CD8-positive, alpha-beta T cell (primary cell): ENCODE measurements at regions of chr14 and their contacts with region 1.

Region 1: GRCh38 chr14:89767861-89768268 is 186.7 kb downstream of the EFCAB11 start:
- DNase-seq: peak; percentile 42 to 87 (median 67)
- ATAC-seq: peak; percentile 93
- H3K4me3 ChIP-seq: no peak overlapping the region
- H3K4me3 Mint-ChIP-seq: peak overlapping the region; percentile 67
- H3K27ac ChIP-seq: no peak overlapping the region
- H3K27ac Mint-ChIP-seq: peak overlapping the region; percentile 84
- H3K4me1 ChIP-seq: peaks cover 29% of the 10 kb centered on the region
- H3K4me1 Mint-ChIP-seq: peaks cover 50% of the 10 kb centered on the region
- H3K27me3 ChIP-seq: no peaks in the 10 kb centered on the region
- H3K27me3 Mint-ChIP-seq: no peaks in the 10 kb centered on the region
- CTCF ChIP-seq: peak; percentile 87

Region 2: GRCh38 chr14:89040460-89041259 is 727.2 kb before region 1 on chr14:
- CTCF ChIA-PET with region 1: interaction called, 6 read pairs
- POLR2A ChIA-PET with region 1: no interaction called
- intact Hi-C with region 1: loop called (anchors 1 kb)
- DNase-seq: peak; percentile 56 to 90 (median 74)
- ATAC-seq: peak; percentile 66
- H3K4me3 ChIP-seq: peak overlapping the region; percentile 27 to 55
- H3K4me3 Mint-ChIP-seq: peak overlapping the region; percentile 79
- H3K27ac ChIP-seq: no peak overlapping the region
- H3K27ac Mint-ChIP-seq: no peak overlapping the region
- H3K4me1 ChIP-seq: peaks cover 7% of the 10 kb centered on the region
- H3K4me1 Mint-ChIP-seq: peaks cover 7% of the 10 kb centered on the region
- H3K27me3 ChIP-seq: peaks cover 0 to 14% of the 10 kb centered on the region in 2 experiments
- H3K27me3 Mint-ChIP-seq: peaks cover 29% of the 10 kb centered on the region
- CTCF ChIP-seq: peak; percentile 90

Region 3: GRCh38 chr14:89336338-89336737 is 431.5 kb before region 1 on chr14:
- CTCF ChIA-PET with region 1: no interaction called
- POLR2A ChIA-PET with region 1: interaction called, 3 read pairs
- intact Hi-C with region 1: loop called (anchors 1 to 5 kb)
- DNase-seq: peak in 2 of 9 experiments; percentile 37 to 55
- ATAC-seq: peak; percentile 23
- H3K4me3 ChIP-seq: no peak overlapping the region
- H3K4me3 Mint-ChIP-seq: no peak overlapping the region
- H3K27ac ChIP-seq: no peak overlapping the region
- H3K27ac Mint-ChIP-seq: peak overlapping the region; percentile 23
- H3K4me1 ChIP-seq: peaks cover 4% of the 10 kb centered on the region
- H3K4me1 Mint-ChIP-seq: peaks cover 51% of the 10 kb centered on the region
- H3K27me3 ChIP-seq: no peaks in the 10 kb centered on the region
- H3K27me3 Mint-ChIP-seq: no peaks in the 10 kb centered on the region
- CTCF ChIP-seq: no peak

Region 4: DNA sequence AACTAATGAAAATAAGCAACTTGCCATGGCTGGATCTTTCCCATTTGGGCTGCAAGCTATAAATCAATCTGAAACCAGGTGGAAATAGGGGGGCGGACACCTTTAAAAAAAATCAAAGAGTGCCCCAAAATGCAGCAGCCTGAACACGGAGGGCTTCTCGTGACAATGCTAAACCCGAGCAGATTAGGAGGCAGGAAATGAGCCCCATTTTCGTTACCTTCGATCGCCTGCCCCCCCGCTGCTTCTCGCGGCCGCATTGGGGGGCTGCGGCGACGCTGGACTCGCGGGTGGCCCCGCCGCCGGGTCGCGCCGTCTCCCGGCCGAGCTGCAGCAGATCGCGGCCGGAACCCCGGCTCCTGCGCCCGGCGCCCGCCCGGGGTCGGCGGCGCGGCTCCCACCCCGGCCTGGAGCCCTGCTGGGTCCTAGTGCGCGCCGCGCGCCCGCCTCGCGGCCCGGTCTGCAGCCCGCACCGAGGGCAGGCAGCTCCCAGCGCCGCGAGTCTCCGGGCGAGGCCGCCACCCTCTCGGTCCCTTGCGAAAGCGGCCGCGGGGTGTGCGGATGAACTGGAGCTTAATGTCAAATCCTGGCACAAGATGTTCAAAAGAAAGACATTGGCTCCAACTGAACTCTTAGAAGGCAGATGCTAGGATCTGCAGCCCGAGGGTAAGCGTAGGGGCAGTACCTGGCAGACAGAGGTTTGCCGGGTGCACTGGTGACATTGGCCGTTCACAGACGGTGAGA is 148.9 kb before region 1 on chr14:
- CTCF ChIA-PET with region 1: interaction called, 4 read pairs
- POLR2A ChIA-PET with region 1: interaction called, 4 read pairs
- intact Hi-C with region 1: loop called (anchors 1 to 5 kb)
- DNase-seq: peak; percentile 43 to 87 (median 66)
- ATAC-seq: peak; percentile 44
- H3K4me3 ChIP-seq: peak overlapping the region; percentile 64 to 73
- H3K4me3 Mint-ChIP-seq: peak overlapping the region; percentile 97
- H3K27ac ChIP-seq: peak overlapping the region; percentile 89 to 90
- H3K27ac Mint-ChIP-seq: peak overlapping the region; percentile 98
- H3K4me1 ChIP-seq: peaks cover 54% of the 10 kb centered on the region
- H3K4me1 Mint-ChIP-seq: peaks cover 68% of the 10 kb centered on the region
- H3K27me3 ChIP-seq: no peaks in the 10 kb centered on the region
- H3K27me3 Mint-ChIP-seq: no peaks in the 10 kb centered on the region
- CTCF ChIP-seq: no peak

Region 5: GRCh38 chr14:89701211-89702043 is 66.4 kb before region 1 on chr14:
- CTCF ChIA-PET with region 1: interaction called, 16 read pairs
- POLR2A ChIA-PET with region 1: no interaction called
- intact Hi-C with region 1: loop called (anchors 1 to 5 kb)
- DNase-seq: peak; percentile 66 to 90 (median 82)
- ATAC-seq: peak; percentile 84
- H3K4me3 ChIP-seq: peak overlapping the region; percentile 56 to 69
- H3K4me3 Mint-ChIP-seq: peak overlapping the region; percentile 86
- H3K27ac ChIP-seq: peak overlapping the region; percentile 57 to 62
- H3K27ac Mint-ChIP-seq: peak overlapping the region; percentile 88
- H3K4me1 ChIP-seq: peaks cover 27% of the 10 kb centered on the region
- H3K4me1 Mint-ChIP-seq: peaks cover 53% of the 10 kb centered on the region
- H3K27me3 ChIP-seq: no peaks in the 10 kb centered on the region
- H3K27me3 Mint-ChIP-seq: no peaks in the 10 kb centered on the region
- CTCF ChIP-seq: no peak

Region 6: GRCh38 chr14:89833120-89833644 is 65.3 kb after region 1 on chr14:
- CTCF ChIA-PET with region 1: no interaction called
- POLR2A ChIA-PET with region 1: no interaction called
- intact Hi-C with region 1: no loop called
- DNase-seq: no peak
- ATAC-seq: no peak
- H3K4me3 ChIP-seq: no peak overlapping the region
- H3K4me3 Mint-ChIP-seq: no peak overlapping the region
- H3K27ac ChIP-seq: no peak overlapping the region
- H3K27ac Mint-ChIP-seq: no peak overlapping the region
- H3K4me1 ChIP-seq: no peaks in the 10 kb centered on the region
- H3K4me1 Mint-ChIP-seq: no peaks in the 10 kb centered on the region
- H3K27me3 ChIP-seq: no peaks in the 10 kb centered on the region
- H3K27me3 Mint-ChIP-seq: no peaks in the 10 kb centered on the region
- CTCF ChIP-seq: no peak